ENCODE measurements at regions of chr5 and their contacts with region 1.

Region 1: GRCh38 chr5:104016646-104017045 is 454.1 kb upstream of the NUDT12 start:
- DNase-seq: no peak
- ATAC-seq: no peak
- H3K4me3 ChIP-seq: no peak overlapping the region
- H3K27ac ChIP-seq: no peak overlapping the region
- H3K4me1 ChIP-seq: no peaks in the 10 kb centered on the region
- H3K27me3 ChIP-seq: no peaks in the 10 kb centered on the region
- CTCF ChIP-seq: no peak
- EP300 ChIP-seq: no peak
- POLR2A ChIP-seq: no peak
- RAD21 ChIP-seq: no peak

Region 2: GRCh38 chr5:103111468-103111867 is 905.2 kb before region 1 on chr5:
- CTCF ChIA-PET with region 1: no interaction called
- POLR2A ChIA-PET with region 1: no interaction called
- in situ Hi-C with region 1: no loop called
- intact Hi-C with region 1: no loop called
- DNase-seq: no peak
- ATAC-seq: no peak
- H3K4me3 ChIP-seq: no peak overlapping the region
- H3K27ac ChIP-seq: no peak overlapping the region
- H3K4me1 ChIP-seq: peaks cover 5% of the 10 kb centered on the region; the same call in 1 of the 2 replicates
- H3K27me3 ChIP-seq: no peaks in the 10 kb centered on the region
- CTCF ChIP-seq: no peak
- EP300 ChIP-seq: no peak
- POLR2A ChIP-seq: no peak
- RAD21 ChIP-seq: no peak

Region 3: GRCh38 chr5:105407185-105407584 is 1390.5 kb after region 1 on chr5:
- CTCF ChIA-PET with region 1: no interaction called
- POLR2A ChIA-PET with region 1: no interaction called
- in situ Hi-C with region 1: no loop called
- intact Hi-C with region 1: loop called (anchors 5 kb)
- DNase-seq: no peak
- ATAC-seq: no peak
- H3K4me3 ChIP-seq: no peak overlapping the region
- H3K27ac ChIP-seq: no peak overlapping the region
- H3K4me1 ChIP-seq: no peaks in the 10 kb centered on the region
- H3K27me3 ChIP-seq: no peaks in the 10 kb centered on the region
- CTCF ChIP-seq: no peak
- EP300 ChIP-seq: no peak
- POLR2A ChIP-seq: no peak
- RAD21 ChIP-seq: no peak

Measured in HepG2 (cell line).